Gastrocnemius medialis (tissue), 4 donors: ENCODE measurements at regions of chr14 and their contacts with region 1.

Region 1: DNA sequence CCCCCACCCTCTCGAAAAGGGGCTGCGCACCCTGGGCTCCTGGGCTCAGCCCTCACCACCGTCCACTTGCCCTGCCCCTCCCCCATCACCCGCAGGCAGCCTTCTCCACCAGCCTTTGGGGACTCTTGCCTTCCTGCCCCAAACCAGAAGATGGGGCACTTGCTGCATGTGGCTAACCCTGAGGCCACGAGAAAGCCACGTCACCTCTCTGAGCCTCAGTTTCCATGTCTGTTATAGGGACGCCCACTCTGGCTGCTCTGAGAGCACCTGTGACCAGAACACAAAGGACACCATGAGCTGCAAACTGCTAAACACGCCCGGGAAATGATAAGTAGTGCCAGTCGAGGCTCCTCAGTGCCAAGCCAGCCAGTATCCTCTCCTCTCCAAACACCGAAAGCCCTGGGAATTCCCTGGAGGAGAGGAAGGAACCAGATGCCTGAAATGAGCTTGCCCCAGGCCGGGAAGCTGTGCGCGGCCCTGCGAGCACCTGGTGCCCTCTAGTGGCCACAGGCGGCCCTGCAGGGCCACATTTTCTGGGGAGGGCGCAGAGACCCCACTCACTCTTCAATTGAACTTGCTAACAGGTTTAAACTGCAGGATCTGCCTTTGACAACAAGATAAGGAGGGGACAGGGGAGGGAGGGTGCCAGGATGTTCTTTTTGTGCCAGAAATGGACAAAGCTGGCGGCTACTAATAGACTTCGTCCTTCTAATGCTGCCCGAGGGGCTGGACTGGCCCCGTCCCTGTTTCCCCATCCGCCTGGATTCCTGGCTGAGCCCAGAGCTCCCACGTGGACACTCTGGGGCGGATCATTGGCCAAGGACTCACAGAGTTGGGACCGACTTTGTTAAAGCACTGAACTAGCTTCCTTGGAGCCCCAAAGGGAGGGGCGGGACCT is 10.2 kb upstream of the SERPINA9 start:
- DNase-seq: no peak
- ATAC-seq: peak; percentile 50 to 55
- H3K4me3 ChIP-seq: peak overlapping the region in 1 of 4 donors; percentile 24
- H3K27ac ChIP-seq: no peak overlapping the region
- H3K4me1 ChIP-seq: peaks cover 0 to 6% of the 10 kb centered on the region in 2 donors
- H3K27me3 ChIP-seq: peaks cover 3 to 16% (median 6%) of the 10 kb centered on the region in 3 donors
- CTCF ChIP-seq: peak; percentile 78 to 96 (median 87)
- POLR2A ChIP-seq: no peak

Region 2: GRCh38 chr14:94136575-94137331 is 349.4 kb before region 1 on chr14:
- in situ Hi-C with region 1: no loop called
- intact Hi-C with region 1: loop called (anchors 10 kb)
- DNase-seq: peak; percentile 61 to 79
- ATAC-seq: peak; percentile 90 to 94
- H3K4me3 ChIP-seq: no peak overlapping the region
- H3K27ac ChIP-seq: no peak overlapping the region
- H3K4me1 ChIP-seq: peaks cover 0 to 3% of the 10 kb centered on the region in 2 donors
- H3K27me3 ChIP-seq: no peaks in the 10 kb centered on the region
- CTCF ChIP-seq: peak; percentile 88 to 99 (median 91)
- POLR2A ChIP-seq: no peak

Region 3: GRCh38 chr14:94355191-94355797 is 130.9 kb before region 1 on chr14:
- in situ Hi-C with region 1: loop called in 1 of 4 experiments (anchors 10 kb)
- intact Hi-C with region 1: no loop called
- DNase-seq: no peak
- ATAC-seq: no peak
- H3K4me3 ChIP-seq: no peak overlapping the region
- H3K27ac ChIP-seq: no peak overlapping the region
- H3K4me1 ChIP-seq: no peaks in the 10 kb centered on the region
- H3K27me3 ChIP-seq: no peaks in the 10 kb centered on the region
- CTCF ChIP-seq: peak in 2 of 5 experiments; percentile 16 to 20
- POLR2A ChIP-seq: no peak